Breast epithelium (tissue), 4 donors: ENCODE measurements at regions of chr1 and their contacts with region 1.

Region 1: GRCh38 chr1:2044510-2045319 is 5.5 kb upstream of the PRKCZ start:
- DNase-seq: peak; percentile 42 to 79
- H3K4me3 ChIP-seq: peak overlapping the region; percentile 22 to 66 (median 46)
- H3K27ac ChIP-seq: no peak overlapping the region
- H3K4me1 ChIP-seq: peaks cover 3 to 4% of the 10 kb centered on the region in 2 donors
- H3K27me3 ChIP-seq: peaks cover 3 to 12% of the 10 kb centered on the region in 2 donors
- CTCF ChIP-seq: peak; percentile 66 to 95 (median 68)
- POLR2A ChIP-seq: no peak

Region 2: DNA sequence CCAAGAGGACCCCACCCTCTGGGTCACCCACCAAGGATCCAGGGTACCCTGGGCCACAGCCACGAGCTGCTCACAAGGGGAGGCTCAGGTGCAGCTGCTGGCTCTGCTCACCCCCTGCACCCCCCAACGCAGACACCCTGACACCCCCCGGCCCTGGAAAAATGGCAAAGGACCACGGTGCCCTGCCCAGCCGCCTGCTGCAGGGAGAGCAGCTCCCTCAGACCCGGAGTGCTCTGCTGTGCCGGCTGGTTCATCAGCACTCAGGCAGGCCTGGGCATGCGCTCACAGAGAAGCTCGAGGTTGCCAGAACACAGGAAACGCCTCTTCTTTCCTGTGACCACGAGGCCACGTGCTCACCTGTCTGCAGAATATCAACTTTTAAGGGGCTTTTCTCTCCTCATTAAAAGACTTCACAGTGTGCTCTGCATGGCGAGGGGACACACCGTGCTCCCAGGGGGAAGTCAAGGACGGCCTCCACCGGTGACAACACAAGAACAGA is 793.9 kb before region 1 on chr1:
- intact Hi-C with region 1: no loop called
- DNase-seq: no peak
- H3K4me3 ChIP-seq: no peak overlapping the region
- H3K27ac ChIP-seq: no peak overlapping the region
- H3K4me1 ChIP-seq: peaks cover 0 to 8% of the 10 kb centered on the region in 2 donors
- H3K27me3 ChIP-seq: peaks cover 2 to 20% of the 10 kb centered on the region in 2 donors
- CTCF ChIP-seq: no peak
- POLR2A ChIP-seq: no peak

Region 3: DNA sequence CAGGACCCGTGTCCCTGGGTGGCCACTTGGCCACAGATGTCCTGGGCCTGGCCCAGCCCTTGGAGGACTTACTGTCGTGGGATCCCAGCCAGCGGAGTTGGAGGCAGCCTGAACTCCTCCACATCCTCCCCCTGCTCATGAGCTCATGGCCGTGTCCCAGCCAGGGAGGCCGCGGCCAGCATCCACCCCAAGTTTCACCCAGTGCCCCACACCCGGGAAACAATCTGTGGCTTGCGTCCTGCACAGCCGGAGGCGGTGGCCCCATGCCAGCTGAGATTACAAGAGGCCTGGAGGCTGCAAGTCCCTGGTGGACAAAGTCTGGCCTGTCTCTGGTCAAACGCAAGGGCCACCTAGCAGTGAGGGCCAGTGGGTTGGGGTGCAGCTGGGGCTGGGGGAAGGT is 98.2 kb before region 1 on chr1:
- intact Hi-C with region 1: loop called (anchors 5 kb)
- DNase-seq: no peak
- H3K4me3 ChIP-seq: no peak overlapping the region
- H3K27ac ChIP-seq: no peak overlapping the region
- H3K4me1 ChIP-seq: no peaks in the 10 kb centered on the region
- H3K27me3 ChIP-seq: peaks cover 0 to 18% of the 10 kb centered on the region in 2 donors
- CTCF ChIP-seq: no peak
- POLR2A ChIP-seq: no peak

Region 4: GRCh38 chr1:2988256-2988655 is 943.5 kb after region 1 on chr1:
- intact Hi-C with region 1: no loop called
- DNase-seq: peak in 1 of 2 donors; percentile 14
- H3K4me3 ChIP-seq: no peak overlapping the region
- H3K27ac ChIP-seq: no peak overlapping the region
- H3K4me1 ChIP-seq: no peaks in the 10 kb centered on the region
- H3K27me3 ChIP-seq: peaks cover 0 to 49% of the 10 kb centered on the region in 2 donors
- CTCF ChIP-seq: no peak
- POLR2A ChIP-seq: no peak